Activated CD8-positive, alpha-beta T cell treated with anti-CD3 and anti-CD28 coated beads, Interleukin-2, amount 10 ng/mL, durations not matched to agents 7 days and 5 days (primary cell): ENCODE measurements at regions of chr4 and their contacts with region 1.

Region 1: GRCh38 chr4:140049024-140049848 is 104.7 kb downstream of the MAML3 start:
- DNase-seq: peak; percentile 73
- ATAC-seq: peak; percentile 95
- H3K4me3 Mint-ChIP-seq: peak overlapping the region; percentile 76
- H3K27ac Mint-ChIP-seq: peak overlapping the region; percentile 86
- H3K4me1 Mint-ChIP-seq: peaks cover 67% of the 10 kb centered on the region
- H3K27me3 Mint-ChIP-seq: peaks cover 5% of the 10 kb centered on the region

Region 2: GRCh38 chr4:139734875-139735380 is 314.3 kb before region 1 on chr4:
- CTCF ChIA-PET with region 1: interaction called, 10 read pairs
- POLR2A ChIA-PET with region 1: no interaction called
- DNase-seq: peak; percentile 68
- ATAC-seq: peak; percentile 82
- H3K4me3 Mint-ChIP-seq: peak overlapping the region; percentile 66
- H3K27ac Mint-ChIP-seq: no peak overlapping the region
- H3K4me1 Mint-ChIP-seq: peaks cover 13% of the 10 kb centered on the region
- H3K27me3 Mint-ChIP-seq: peaks cover 45% of the 10 kb centered on the region

Region 3: GRCh38 chr4:139825523-139826014 is 223.7 kb before region 1 on chr4:
- CTCF ChIA-PET with region 1: no interaction called
- POLR2A ChIA-PET with region 1: no interaction called
- DNase-seq: no peak
- ATAC-seq: no peak
- H3K4me3 Mint-ChIP-seq: no peak overlapping the region
- H3K27ac Mint-ChIP-seq: no peak overlapping the region
- H3K4me1 Mint-ChIP-seq: no peaks in the 10 kb centered on the region
- H3K27me3 Mint-ChIP-seq: no peaks in the 10 kb centered on the region

Region 4: GRCh38 chr4:140071806-140072205 is 22.6 kb after region 1 on chr4:
- CTCF ChIA-PET with region 1: interaction called, 44 read pairs
- POLR2A ChIA-PET with region 1: interaction called, 7 read pairs
- DNase-seq: peak; percentile 88
- ATAC-seq: peak; percentile 85
- H3K4me3 Mint-ChIP-seq: peak overlapping the region; percentile 55
- H3K27ac Mint-ChIP-seq: peak overlapping the region; percentile 85
- H3K4me1 Mint-ChIP-seq: peaks cover 58% of the 10 kb centered on the region
- H3K27me3 Mint-ChIP-seq: peaks cover 14% of the 10 kb centered on the region

Region 5: DNA sequence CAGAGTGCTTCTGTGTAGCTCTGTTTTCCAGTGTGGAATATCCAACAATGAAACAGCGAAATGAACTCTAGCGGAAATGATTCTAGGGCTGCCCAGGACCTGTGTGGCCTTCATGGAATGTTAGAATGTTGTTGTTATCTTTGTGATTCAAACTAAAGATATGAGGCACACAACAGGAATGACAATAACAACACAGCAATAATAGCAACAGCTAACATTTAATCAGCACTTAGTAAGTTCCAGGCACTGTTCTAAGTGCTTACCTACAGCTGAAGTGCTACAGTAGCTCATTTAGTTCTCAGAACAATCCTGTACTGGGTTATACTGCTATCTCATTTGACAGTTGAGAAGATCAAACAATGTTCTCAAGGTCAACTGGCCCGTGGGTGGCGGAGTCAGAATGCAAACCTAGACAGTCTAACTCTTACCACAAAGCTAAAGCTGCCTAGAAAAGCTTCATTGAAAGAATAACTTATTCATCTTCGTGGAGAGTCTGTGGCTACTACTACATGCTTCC is 41.0 kb after region 1 on chr4:
- CTCF ChIA-PET with region 1: interaction called, 19 read pairs
- POLR2A ChIA-PET with region 1: interaction called, 3 read pairs
- DNase-seq: no peak
- ATAC-seq: no peak
- H3K4me3 Mint-ChIP-seq: no peak overlapping the region
- H3K27ac Mint-ChIP-seq: no peak overlapping the region
- H3K4me1 Mint-ChIP-seq: peaks cover 41% of the 10 kb centered on the region
- H3K27me3 Mint-ChIP-seq: no peaks in the 10 kb centered on the region

Region 6: DNA sequence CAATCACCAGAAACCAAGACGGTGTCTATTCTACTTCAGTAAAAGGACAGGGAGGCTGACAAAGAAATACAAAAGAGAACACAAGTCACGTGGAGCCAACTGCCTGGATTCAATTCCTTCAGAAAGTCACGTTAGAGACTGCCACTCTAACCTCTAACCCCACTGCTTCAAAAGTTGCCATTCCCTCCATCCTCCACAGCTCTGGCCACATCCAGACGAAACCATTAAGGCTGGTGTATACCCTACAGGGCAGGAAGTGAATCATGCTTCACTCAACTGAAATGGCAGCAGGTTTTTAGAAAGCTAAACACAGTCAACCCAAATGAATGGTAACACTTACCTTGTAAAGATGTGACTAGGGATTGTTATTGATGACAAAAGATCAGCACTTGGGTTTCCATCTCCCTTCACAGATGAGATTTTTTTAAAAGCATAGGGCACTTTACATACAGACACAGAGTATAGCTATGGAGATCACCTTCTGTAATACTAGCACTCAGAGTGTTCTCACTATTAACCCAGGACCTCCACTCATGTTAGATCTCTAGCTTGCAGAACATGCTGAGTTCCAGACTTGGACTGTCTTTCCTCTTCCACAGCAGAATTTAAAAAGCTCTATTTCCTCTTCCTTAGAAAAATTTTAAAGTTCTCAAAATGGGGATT is 67.3 kb after region 1 on chr4:
- CTCF ChIA-PET with region 1: interaction called, 16 read pairs
- POLR2A ChIA-PET with region 1: no interaction called
- DNase-seq: peak; percentile 74
- ATAC-seq: peak; percentile 99
- H3K4me3 Mint-ChIP-seq: peak overlapping the region; percentile 4
- H3K27ac Mint-ChIP-seq: peak overlapping the region; percentile 93
- H3K4me1 Mint-ChIP-seq: peaks cover 37% of the 10 kb centered on the region
- H3K27me3 Mint-ChIP-seq: no peaks in the 10 kb centered on the region

Region 7: DNA sequence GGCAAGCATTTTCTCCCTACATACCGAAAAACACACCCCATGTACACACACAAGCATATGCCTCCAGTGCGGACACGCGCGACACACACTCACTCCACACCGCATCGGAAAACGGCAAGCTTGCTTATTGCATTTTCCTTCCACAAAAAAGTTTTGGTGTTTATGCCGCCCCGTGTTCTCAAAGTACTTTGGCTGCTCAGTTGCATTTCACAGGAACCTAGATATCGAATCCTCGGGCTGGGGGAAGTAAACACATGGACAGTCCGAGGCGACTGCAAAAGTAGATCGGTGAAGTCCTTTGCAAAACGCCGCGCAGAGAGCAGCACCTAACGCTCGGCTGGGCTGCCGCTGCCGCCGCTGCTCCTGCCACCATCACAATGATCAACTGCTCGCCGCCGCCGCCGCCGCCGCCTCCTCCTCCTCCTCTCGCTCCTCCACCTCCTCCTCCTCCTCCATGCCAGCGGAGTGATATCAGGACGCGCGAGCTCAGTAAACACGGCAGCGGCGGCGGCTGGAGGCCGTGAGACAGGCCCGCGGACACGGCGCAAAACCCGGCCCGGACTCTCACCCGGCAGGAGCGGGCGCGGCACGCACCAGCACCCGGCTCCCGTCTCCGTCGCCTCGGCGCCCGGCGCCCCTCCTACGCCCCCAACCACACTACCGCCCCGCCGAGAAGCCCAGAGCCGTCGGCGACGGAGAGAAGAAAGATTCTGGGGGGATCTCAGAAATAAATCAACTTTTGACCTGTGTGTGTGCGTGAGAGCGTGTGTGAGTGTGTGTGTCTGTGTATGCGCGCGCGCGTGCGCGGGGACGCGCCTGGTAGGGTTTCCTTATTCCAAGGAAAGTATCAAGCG is 104.7 kb after region 1 on chr4 and contains the start of gene MAML3:
- CTCF ChIA-PET with region 1: interaction called, 20 read pairs
- POLR2A ChIA-PET with region 1: interaction called, 8 read pairs
- DNase-seq: peak; percentile 89
- ATAC-seq: peak; percentile 41
- H3K4me3 Mint-ChIP-seq: peak within 1 kb of the TSS; percentile 90
- H3K27ac Mint-ChIP-seq: peak within 1 kb of the TSS; percentile 79
- H3K4me1 Mint-ChIP-seq: peaks cover 39% of the 10 kb centered on the region
- H3K27me3 Mint-ChIP-seq: peaks cover 14% of the 10 kb centered on the region
- total RNA-seq, gene MAML3: 4.0 to 4.1 TPM